Dendritic cell treated with granulocyte-macrophage colony-stimulating factor and Interleukin-4, amounts not matched to agents 40 ng/mL and 50 ng/mL, for 4 days (primary cell): ENCODE measurements at regions of chr4 and their contacts with region 1.

Region 1: DNA sequence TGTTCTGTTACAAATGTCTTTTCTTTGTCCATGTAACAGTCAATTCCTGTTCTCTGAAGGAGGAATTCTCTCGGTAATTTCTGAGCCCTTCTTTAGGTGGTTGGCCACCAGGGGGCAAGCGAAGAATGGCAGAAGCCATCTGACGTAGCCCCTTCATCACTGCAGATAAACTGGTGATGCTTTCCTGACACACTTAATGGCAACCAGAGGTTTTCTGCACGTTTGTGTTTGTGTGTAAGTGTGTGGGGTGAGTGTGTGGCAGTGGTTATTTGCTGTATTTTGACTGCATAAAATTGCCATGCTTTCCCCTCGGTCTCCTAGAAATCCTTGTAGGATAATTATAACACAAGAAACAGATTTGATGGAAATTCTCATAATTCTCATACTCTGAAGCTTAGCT is 64.8 kb upstream of the STOX2 start:
- H3K4me3 Mint-ChIP-seq: no peak overlapping the region
- H3K27ac Mint-ChIP-seq: no peak overlapping the region
- H3K4me1 Mint-ChIP-seq: no peaks in the 10 kb centered on the region
- H3K27me3 Mint-ChIP-seq: no peaks in the 10 kb centered on the region

Region 2: DNA sequence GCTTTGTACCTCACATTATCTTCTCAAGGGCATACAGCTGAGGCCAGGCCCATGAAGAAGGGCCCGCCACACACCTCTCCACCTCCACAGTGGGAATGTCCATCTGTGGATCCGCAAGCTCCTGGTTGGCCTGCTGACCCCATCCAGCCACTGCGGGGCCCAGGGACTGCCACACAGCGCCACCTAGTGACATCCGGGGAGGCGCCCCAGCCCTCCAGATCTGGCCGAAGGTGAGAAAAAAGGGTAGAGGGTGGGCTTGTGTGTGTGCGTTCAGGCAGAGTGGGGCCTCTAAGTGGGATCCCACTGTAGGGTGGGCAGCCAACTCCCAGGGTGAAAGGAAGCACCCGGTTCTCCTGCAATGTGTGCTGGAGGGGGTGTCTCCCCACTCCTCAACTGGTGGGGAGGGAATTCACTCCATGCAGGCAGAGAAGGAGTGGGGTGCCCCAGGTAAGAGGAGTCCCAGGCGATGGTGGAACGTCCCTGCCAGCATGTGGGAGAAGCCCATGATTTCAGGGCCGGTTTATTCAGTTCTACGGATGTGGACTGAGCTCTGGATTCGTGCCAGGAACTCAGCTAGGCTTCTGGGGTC is 260.1 kb after region 1 on chr4:
- intact Hi-C with region 1: loop called (anchors 1 kb)
- H3K4me3 Mint-ChIP-seq: no peak overlapping the region
- H3K27ac Mint-ChIP-seq: no peak overlapping the region
- H3K4me1 Mint-ChIP-seq: peaks cover 10% of the 10 kb centered on the region
- H3K27me3 Mint-ChIP-seq: no peaks in the 10 kb centered on the region

Region 3: DNA sequence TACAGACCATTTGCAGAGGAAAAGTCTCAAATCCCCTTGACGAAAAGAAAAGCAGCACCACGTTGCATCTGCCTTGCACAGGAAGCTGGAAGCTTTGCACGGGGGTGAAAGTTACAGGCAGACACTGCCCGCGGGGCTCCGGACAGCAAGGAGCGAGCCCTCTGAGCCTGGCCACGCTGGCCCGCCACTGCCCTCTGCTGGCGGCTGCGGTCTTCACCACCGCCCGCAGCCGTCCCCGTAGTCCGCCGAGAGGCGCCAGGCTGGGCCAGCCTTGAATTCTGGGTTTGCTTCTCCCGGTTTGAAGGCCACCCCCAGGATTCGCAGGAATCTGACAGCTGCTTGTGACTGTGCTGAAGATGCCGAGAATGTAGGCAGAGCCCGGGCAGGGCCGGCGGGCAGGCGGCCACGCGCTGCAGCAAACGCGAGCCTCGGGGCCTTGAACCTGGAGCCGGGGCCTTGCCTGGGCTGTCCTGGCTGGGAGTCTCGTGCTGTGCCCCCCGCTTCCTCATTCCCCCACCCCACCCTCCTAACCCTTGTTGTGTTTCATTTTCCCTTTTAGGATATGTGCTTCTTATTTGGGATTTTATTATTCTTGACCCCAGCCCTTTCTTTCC is 328.2 kb after region 1 on chr4:
- intact Hi-C with region 1: loop called (anchors 1 kb)
- H3K4me3 Mint-ChIP-seq: peak overlapping the region; percentile 27
- H3K27ac Mint-ChIP-seq: no peak overlapping the region
- H3K4me1 Mint-ChIP-seq: peaks cover 10% of the 10 kb centered on the region
- H3K27me3 Mint-ChIP-seq: peaks cover 48% of the 10 kb centered on the region

Region 4: DNA sequence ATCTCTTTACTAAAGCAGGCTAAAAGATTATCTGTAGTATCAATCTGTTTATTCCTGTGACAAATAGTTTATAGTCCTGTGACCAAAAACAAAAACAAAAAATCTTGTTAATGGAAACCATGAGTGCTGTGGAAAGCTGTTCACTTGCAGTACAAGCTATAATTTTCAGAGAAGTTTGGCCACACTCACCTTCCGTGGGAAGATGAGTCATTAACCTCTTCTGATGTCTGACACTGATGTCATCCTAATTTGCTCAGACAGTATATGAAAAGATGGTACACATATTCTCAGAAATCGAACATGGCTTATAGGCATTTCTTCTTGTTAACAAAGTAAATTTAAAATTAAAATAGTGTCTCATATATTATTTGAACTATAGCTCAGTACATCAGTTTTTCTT is 397.3 kb after region 1 on chr4:
- intact Hi-C with region 1: loop called (anchors 10 kb)
- H3K4me3 Mint-ChIP-seq: no peak overlapping the region
- H3K27ac Mint-ChIP-seq: no peak overlapping the region
- H3K4me1 Mint-ChIP-seq: no peaks in the 10 kb centered on the region
- H3K27me3 Mint-ChIP-seq: peaks cover 3% of the 10 kb centered on the region